ENCODE measurements at regions of chr4 and their contacts with region 1.

Region 1: DNA sequence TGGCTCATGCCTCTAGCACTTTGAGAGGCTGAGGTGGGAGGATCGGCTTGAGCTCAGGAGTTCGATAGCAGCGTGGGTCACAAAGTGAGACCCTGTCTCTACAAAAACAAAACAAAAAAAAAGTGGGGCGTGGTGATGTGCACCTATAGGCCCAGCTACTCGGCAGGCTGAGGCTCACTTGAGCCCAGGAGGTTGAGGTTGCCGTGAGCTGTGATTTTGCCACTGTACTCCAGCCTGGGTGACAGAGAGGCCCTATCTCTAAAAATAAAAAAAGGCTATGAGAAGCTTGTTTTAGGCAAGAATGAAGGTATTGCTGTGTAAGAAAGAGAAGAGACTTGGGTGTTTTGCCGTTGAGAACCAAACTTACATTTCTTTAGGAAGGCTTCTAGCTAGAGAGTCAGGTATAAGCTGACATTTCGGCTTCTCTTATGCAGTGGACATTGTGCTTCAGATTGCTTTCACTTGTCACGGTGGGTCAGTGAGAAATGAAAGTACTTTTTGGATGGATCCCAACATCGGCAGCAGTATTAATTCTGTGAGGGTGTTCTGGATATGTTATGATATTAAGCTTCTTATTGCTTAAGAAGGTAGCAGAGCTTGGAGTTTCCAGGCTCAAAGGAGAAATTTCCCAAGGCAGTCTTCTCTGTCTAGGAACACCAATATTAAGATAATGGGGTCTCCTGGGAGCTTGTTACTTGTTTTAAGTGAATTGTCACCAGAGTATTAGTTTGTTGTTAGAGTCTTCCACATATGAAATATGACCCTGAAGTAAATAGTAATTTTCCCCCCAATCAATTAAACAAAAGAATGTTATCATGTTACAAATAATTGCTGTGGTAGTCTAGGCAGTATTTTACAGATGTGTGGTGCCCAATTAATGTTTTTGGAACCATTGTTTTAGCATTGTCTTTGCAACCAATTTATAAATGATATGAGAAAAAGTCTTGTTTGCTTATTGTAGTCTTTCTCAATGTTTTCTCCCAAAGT is 17.6 kb downstream of the TMEM131L start:
- DNase-seq: no peak
- H3K4me3 ChIP-seq: no peak overlapping the region
- H3K27ac ChIP-seq: no peak overlapping the region
- H3K4me1 ChIP-seq: no peaks in the 10 kb centered on the region
- H3K27me3 ChIP-seq: no peaks in the 10 kb centered on the region
- CTCF ChIP-seq: no peak
- POLR2A ChIP-seq: no peak

Region 2: GRCh38 chr4:153318696-153319320 is 164.9 kb before region 1 on chr4:
- intact Hi-C with region 1: no loop called
- DNase-seq: peak; percentile 39
- H3K4me3 ChIP-seq: no peak overlapping the region
- H3K27ac ChIP-seq: no peak overlapping the region
- H3K4me1 ChIP-seq: no peaks in the 10 kb centered on the region
- H3K27me3 ChIP-seq: no peaks in the 10 kb centered on the region
- CTCF ChIP-seq: peak in 3 of 4 experiments; percentile 60 to 74 (median 71)
- POLR2A ChIP-seq: no peak

Region 3: DNA sequence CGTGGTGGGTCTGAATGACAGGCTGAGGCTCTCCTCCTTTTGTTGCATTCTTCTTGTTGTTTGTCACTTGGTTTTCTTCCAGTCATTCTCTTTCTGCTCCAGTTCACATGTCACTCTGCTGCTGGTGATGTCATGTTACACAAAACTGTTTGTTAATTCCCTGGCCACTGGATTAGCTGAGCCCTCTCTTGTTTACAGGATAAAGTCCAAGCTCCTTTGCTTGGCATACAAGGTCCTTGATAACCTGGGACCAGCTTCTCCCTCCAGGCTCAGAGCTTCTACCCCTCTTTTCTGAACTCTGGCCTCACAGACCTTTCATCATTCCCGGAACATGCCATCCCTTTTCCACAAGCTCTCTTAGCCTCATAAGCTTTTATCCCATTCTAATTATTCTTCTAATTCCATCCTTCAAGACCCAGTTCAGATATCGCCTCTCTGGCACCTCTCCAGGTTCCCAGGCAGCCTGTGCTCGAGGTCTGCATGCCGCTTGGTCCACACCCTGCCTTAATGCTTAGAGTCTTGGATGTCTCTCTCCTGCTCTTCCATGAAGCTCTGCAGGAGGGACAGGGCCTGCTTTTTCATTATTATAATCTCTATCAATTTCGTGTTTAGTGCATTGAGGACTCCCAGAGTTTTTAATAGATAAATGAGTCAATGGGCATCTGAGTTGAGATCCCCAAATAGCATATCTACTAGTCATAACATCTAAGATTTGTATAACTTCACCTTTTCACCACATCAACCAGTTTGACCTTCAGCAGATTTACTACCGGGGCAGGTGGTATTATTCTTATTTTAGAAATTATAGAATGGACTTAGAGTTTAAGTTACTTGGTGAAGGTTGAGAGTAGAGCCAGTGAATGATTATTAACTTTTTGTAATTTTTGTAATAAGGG is 81.2 kb after region 1 on chr4:
- intact Hi-C with region 1: loop called (anchors 5 kb)
- DNase-seq: no peak
- H3K4me3 ChIP-seq: no peak overlapping the region
- H3K27ac ChIP-seq: no peak overlapping the region
- H3K4me1 ChIP-seq: no peaks in the 10 kb centered on the region
- H3K27me3 ChIP-seq: no peaks in the 10 kb centered on the region
- CTCF ChIP-seq: no peak
- POLR2A ChIP-seq: no peak

Measured in prostate gland (tissue), 2 donors.